ENCODE measurements at regions of chr19 and their contacts with region 1.

Region 1: GRCh38 chr19:11587302-11587974 is 9.8 kb upstream of the ZNF627 start:
- DNase-seq: peak; percentile 77 to 87 (median 80)
- ATAC-seq: peak; percentile 93
- H3K4me3 ChIP-seq: no peak overlapping the region
- H3K27ac ChIP-seq: no peak overlapping the region
- H3K4me1 ChIP-seq: peaks cover 12 to 20% of the 10 kb centered on the region in 2 experiments; a peak in 4 of 5 replicates
- H3K27me3 ChIP-seq: no peaks in the 10 kb centered on the region
- CTCF ChIP-seq: peak; percentile 87 to 96 (median 96)
- EP300 ChIP-seq: no peak
- POLR2A ChIP-seq: no peak
- RAD21 ChIP-seq: peak; percentile 92 to 98

Region 2: DNA sequence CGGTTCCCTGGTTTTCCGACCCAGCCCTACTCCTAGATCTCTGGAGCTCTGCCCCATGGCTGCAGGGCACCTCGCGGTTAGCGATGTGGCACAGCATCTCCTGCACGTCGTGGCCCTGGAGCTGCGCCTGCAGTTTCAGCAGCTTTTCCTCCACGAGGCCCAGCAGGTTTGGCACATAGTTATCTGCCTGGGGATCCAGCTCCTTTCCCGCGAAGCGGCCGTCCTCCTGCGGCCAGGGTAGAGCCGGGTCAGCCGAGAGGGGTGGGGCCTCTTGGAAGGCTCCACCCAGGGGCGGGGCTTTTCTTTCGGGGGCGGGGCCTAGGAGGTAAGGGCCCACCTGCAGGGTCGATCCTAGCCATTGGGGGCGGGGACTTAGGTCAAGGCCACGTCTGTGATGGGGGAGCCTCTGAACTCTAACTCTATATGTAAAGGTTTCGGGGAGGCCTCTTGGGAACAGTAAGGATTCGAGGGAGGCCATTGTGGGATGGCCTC is 165.8 kb before region 1 on chr19:
- CTCF ChIA-PET with region 1: no interaction called
- POLR2A ChIA-PET with region 1: no interaction called
- in situ Hi-C with region 1: no loop called
- intact Hi-C with region 1: no loop called
- DNase-seq: peak; percentile 59 to 89 (median 86)
- ATAC-seq: peak; percentile 90
- H3K4me3 ChIP-seq: no peak overlapping the region
- H3K27ac ChIP-seq: no peak overlapping the region
- H3K4me1 ChIP-seq: peaks cover 2 to 66% of the 10 kb centered on the region in 2 experiments; a peak in 3 of 5 replicates
- H3K27me3 ChIP-seq: peaks cover 2 to 23% of the 10 kb centered on the region in 2 experiments; a peak in 3 of 5 replicates
- CTCF ChIP-seq: no peak
- EP300 ChIP-seq: no peak
- POLR2A ChIP-seq: no peak
- RAD21 ChIP-seq: no peak

Region 3: GRCh38 chr19:11547929-11548700 is 39.3 kb before region 1 on chr19:
- CTCF ChIA-PET with region 1: no interaction called
- POLR2A ChIA-PET with region 1: no interaction called
- in situ Hi-C with region 1: no loop called
- intact Hi-C with region 1: no loop called
- DNase-seq: no peak
- ATAC-seq: no peak
- H3K4me3 ChIP-seq: no peak overlapping the region
- H3K27ac ChIP-seq: no peak overlapping the region
- H3K4me1 ChIP-seq: peaks cover 0 to 24% of the 10 kb centered on the region in 2 experiments; a peak in 2 of 5 replicates
- H3K27me3 ChIP-seq: no peaks in the 10 kb centered on the region
- CTCF ChIP-seq: no peak
- EP300 ChIP-seq: no peak
- POLR2A ChIP-seq: no peak
- RAD21 ChIP-seq: no peak

Region 4: DNA sequence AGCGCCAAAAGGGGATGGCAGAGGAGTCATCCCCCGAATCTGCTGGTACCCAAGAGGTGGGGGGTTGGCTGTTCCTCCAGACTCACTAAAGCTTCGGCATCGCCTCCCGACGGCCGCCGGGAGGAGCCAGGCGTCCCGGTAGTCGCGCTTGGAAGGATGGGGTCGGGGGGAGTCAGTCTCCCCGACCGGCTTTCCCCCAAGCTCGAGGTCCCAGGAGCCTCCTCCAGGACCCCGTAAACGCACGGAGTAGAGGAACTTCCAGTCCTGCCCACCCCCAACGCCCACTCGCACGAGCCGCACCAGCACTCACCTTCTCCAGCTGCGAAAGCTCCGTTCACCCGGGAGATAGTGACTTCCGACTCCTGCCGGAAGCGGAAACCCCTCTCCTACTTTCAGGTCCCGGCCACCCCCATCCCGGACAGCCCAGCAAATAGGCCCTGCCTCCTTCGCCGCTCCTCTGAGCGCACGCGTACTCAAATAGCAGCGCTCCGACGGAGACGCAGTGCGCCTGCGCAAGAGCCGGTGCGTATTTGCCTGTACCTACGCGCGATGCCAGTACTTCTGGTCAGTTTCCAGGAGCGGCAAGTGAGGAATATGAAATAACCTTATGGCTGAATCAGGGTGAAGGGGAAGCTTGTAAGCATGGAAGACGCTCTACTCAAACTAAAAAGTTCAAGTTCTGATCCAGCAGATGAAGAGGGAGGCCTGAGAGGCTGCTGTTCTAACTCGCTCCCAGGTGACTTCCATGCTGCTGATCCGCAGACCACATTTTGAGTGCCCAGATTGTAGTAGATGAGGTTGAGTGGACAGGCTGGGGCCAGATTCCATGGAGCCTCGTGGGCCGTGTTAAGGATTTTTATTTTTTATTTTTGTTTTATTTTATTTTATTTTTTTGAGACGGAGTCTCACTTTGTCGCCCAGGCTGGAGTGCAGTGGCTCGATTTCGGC is 28.3 kb before region 1 on chr19 and contains the start of gene ELOF1:
- CTCF ChIA-PET with region 1: interaction called, 32 read pairs
- POLR2A ChIA-PET with region 1: interaction called, 5 read pairs
- in situ Hi-C with region 1: no loop called
- intact Hi-C with region 1: loop called (anchors 1 kb)
- DNase-seq: peak; percentile 94 to 100 (median 96)
- ATAC-seq: peak; percentile 92
- H3K4me3 ChIP-seq: peak within 1 kb of the TSS; percentile 88
- H3K27ac ChIP-seq: peak within 1 kb of the TSS; percentile 94
- H3K4me1 ChIP-seq: peaks cover 38 to 41% of the 10 kb centered on the region in 2 experiments
- H3K27me3 ChIP-seq: no peaks in the 10 kb centered on the region
- CTCF ChIP-seq: peak in 2 of 3 experiments; percentile 20 to 25; a peak in 4 of 6 replicates
- EP300 ChIP-seq: no peak; the same call in 1 of the 2 replicates
- POLR2A ChIP-seq: peak; percentile 97
- RAD21 ChIP-seq: peak in 1 of 2 experiments; percentile 30; a peak in 3 of 4 replicates
- polyA plus RNA-seq, gene ELOF1: 16.7 to 49.1 TPM